AG04450 (cell line): ENCODE measurements at regions of chr3 and their contacts with region 1.

Region 1: GRCh38 chr3:168847291-168847883 is 751.7 kb upstream of the GOLIM4 start:
- DNase-seq: peak; percentile 2
- H3K4me3 ChIP-seq: no peak overlapping the region
- H3K27ac ChIP-seq: no peak overlapping the region
- H3K27me3 ChIP-seq: peaks cover 3% of the 10 kb centered on the region
- CTCF ChIP-seq: peak; percentile 74

Region 2: GRCh38 chr3:168205451-168205850 is 641.9 kb before region 1 on chr3:
- CTCF ChIA-PET with region 1: interaction called, 138 read pairs
- POLR2A ChIA-PET with region 1: no interaction called
- DNase-seq: no peak
- H3K4me3 ChIP-seq: no peak overlapping the region
- H3K27ac ChIP-seq: no peak overlapping the region
- H3K27me3 ChIP-seq: no peaks in the 10 kb centered on the region
- CTCF ChIP-seq: no peak

Region 3: GRCh38 chr3:168249550-168250414 is 597.6 kb before region 1 on chr3:
- CTCF ChIA-PET with region 1: interaction called, 10 read pairs
- POLR2A ChIA-PET with region 1: no interaction called
- DNase-seq: peak; percentile 32
- H3K4me3 ChIP-seq: peak overlapping the region; percentile 70
- H3K27ac ChIP-seq: peak overlapping the region; percentile 4
- H3K27me3 ChIP-seq: no peaks in the 10 kb centered on the region
- CTCF ChIP-seq: peak; percentile 38

Region 4: DNA sequence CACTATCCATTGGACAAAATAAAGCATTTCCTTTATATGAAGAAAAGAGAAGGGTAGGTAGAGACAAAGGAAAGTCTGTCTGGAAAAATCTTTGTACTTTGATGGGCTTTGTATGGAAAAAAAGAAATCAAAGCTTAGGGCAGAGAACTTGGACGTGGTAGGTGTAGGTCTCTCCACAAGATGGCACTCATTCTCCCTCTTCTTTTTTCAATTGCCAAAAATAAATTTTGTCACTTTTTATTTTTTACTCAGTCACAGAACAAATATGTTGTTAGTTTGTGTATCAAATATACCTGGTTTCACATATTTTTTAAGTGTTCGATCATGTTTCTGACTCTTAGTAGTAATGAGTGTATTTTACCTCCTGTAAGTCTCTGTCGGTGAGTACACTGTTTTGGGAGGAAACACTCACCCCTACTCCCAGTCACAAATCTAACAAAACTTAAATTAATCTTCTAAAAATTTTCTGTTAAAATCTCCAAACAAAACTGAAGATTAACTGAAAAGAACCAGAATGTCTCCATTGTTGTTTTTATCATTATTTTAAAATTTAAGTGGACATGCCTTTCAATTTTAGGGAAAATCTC is 335.9 kb before region 1 on chr3:
- CTCF ChIA-PET with region 1: interaction called, 67 read pairs
- POLR2A ChIA-PET with region 1: no interaction called
- DNase-seq: no peak
- H3K4me3 ChIP-seq: no peak overlapping the region
- H3K27ac ChIP-seq: no peak overlapping the region
- H3K27me3 ChIP-seq: no peaks in the 10 kb centered on the region
- CTCF ChIP-seq: peak; percentile 68

Region 5: GRCh38 chr3:168782193-168782592 is 65.2 kb before region 1 on chr3:
- CTCF ChIA-PET with region 1: no interaction called
- POLR2A ChIA-PET with region 1: no interaction called
- DNase-seq: no peak
- H3K4me3 ChIP-seq: no peak overlapping the region
- H3K27ac ChIP-seq: no peak overlapping the region
- H3K27me3 ChIP-seq: no peaks in the 10 kb centered on the region
- CTCF ChIP-seq: no peak

Region 6: DNA sequence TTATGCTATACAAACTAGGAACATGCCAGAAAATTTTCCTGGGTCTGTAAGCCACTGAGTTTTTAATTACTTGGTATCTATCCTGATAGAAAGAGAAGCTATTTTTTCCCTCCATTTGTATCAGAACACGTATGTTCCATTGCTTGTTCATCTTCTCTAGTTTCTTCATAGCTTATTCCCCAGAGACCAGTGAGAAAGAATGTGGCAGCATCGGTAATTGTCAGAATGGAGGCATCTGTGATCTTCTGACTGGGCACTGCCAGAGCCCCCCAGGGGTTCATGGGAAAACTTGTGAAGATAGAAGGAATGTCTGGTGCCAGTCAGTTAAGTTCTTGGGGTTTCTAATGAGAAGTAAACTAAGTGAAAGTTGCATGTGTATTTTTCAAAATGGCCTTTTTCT is 31.4 kb before region 1 on chr3:
- CTCF ChIA-PET with region 1: interaction called, 10 read pairs
- POLR2A ChIA-PET with region 1: no interaction called
- DNase-seq: no peak
- H3K4me3 ChIP-seq: no peak overlapping the region
- H3K27ac ChIP-seq: no peak overlapping the region
- H3K27me3 ChIP-seq: no peaks in the 10 kb centered on the region
- CTCF ChIP-seq: no peak

Region 7: DNA sequence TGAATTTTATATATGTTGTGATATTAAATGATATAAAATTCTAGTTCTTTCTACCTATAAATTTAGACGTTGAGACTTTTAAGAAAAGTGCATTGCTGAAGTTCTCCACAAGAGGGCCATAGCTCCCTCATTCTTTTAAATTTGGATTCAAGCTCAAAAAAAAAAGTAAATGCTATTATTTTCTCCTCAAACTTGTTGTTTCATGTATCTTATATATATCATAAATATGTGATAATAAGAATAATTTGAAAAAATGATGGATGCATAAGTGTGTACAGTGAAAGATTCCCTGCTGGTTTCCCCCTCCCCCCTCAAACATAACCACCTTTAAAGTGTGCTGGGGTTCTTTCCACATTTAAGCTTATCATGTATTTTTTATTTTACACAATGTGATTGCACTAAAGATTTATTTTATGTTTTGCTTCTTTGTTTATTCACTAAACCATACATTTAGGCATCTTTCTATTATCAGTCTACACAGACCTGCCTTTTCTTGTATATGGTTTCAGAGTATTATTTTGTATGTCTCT is 17.7 kb after region 1 on chr3:
- CTCF ChIA-PET with region 1: interaction called, 15 read pairs
- POLR2A ChIA-PET with region 1: no interaction called
- DNase-seq: no peak
- H3K4me3 ChIP-seq: no peak overlapping the region
- H3K27ac ChIP-seq: no peak overlapping the region
- H3K27me3 ChIP-seq: no peaks in the 10 kb centered on the region
- CTCF ChIP-seq: peak; percentile 81